ENCODE measurements at regions of chr2 and their contacts with region 1.

Region 1: DNA sequence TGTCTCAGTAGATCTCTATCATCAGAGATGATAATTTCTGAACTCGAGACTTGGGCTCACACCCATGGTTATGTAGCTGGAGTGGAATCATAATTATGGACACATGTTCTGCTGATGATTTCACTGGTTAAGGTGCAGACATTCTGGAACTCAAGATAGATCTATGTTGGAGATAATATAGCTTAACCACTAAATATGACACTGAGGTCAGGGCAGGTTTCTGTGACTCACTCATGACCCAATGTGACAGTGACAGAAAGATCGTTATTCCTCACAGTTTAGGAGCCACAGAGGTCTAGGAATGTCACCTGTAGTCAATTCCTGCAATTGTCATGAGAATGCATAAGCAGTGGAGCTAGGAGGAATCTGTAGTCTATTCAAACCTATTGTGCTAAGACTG is 828.6 kb downstream of the TRIB2 start:
- DNase-seq: no peak
- ATAC-seq: peak; percentile 67
- H3K4me3 ChIP-seq: no peak overlapping the region
- H3K27ac ChIP-seq: no peak overlapping the region
- H3K4me1 ChIP-seq: peaks cover 8% of the 10 kb centered on the region; the same call in 1 of the 2 replicates
- H3K27me3 ChIP-seq: no peaks in the 10 kb centered on the region
- CTCF ChIP-seq: no peak
- EP300 ChIP-seq: peak; percentile 34 to 47; a peak in 2 of 4 replicates
- POLR2A ChIP-seq: no peak
- RAD21 ChIP-seq: no peak

Region 2: DNA sequence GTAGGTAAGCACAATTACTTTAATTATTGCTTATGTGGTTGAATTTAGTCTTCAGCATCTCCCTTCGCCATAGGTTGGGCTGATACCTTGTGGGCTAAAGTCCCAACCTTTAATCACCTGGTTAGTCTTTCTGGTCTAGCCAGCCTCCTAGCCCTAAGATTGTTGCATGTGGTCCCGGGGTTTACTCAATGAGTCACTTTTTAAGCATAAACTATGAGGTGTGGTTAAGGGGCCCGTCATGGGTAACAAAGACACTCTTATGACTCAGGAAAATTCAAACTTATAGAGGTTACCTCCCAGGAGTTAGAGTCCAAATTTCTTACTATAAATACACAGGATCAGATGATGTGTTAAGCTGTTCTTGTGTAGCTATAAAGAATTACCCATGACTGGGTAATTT is 13.0 kb after region 1 on chr2:
- CTCF ChIA-PET with region 1: interaction called, 7 read pairs
- POLR2A ChIA-PET with region 1: no interaction called
- RAD21 ChIA-PET with region 1: interaction called, 33 read pairs
- SMC1A ChIA-PET with region 1: interaction called, 47 read pairs
- in situ Hi-C with region 1: no loop called
- intact Hi-C with region 1: no loop called
- DNase-seq: no peak
- ATAC-seq: peak; percentile 92
- H3K4me3 ChIP-seq: no peak overlapping the region
- H3K27ac ChIP-seq: no peak overlapping the region
- H3K4me1 ChIP-seq: no peaks in the 10 kb centered on the region
- H3K27me3 ChIP-seq: no peaks in the 10 kb centered on the region
- CTCF ChIP-seq: no peak
- EP300 ChIP-seq: peak; percentile 64 to 71; a peak in 3 of 4 replicates
- POLR2A ChIP-seq: no peak
- RAD21 ChIP-seq: peak; percentile 14; the same call in 1 of the 2 replicates

Measured in GM12878 (cell line).